Activated B cell treated with CpG ODN at 0.5 μM for 24 hours (primary cell): ENCODE measurements at regions of chr4 and their contacts with region 1.

Region 1: DNA sequence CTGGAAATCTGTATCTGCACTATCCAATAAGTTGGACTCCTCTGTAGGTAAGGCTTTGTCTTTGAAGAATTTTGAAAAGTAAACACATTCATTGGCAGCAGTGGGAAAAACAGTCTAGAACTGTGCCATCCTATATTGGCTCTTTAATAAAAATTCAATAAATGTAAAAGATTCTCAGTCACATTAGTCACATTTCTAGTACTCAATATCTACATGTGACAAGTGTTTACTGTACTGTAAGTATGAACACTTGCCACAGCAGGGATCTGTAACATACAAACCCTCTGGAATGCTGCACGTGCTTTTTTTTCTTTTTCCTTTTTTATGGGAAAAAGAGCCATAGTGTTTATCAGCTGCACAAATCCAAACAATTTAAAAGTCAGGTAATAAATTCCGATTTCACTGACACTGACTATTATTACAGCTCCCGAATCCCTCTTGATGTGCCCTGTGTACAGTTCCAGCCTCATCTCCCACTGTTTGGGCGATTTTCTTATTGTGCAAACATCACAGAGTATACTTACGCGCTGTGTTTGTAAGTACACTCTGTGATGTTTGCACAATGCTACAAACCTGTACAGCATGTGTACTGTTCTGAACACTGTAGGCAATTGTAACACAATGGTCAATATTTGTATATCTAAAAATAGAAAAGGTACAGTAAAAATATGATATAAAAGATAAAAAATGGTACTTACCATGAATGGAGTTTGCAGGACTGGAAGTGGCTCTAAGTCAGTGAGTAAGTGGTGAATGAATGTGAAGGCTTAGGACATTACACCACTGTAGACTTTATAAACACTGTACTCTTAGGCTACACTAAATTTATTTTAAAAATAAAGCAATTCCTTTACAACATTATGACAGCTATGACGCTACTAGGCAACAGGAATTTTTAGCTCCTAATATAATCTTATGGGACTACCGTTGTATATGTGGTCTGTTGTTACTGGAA is 8.7 kb downstream of the PYURF start:
- DNase-seq: no peak
- ATAC-seq: no peak
- H3K4me3 Mint-ChIP-seq: no peak overlapping the region
- H3K27ac Mint-ChIP-seq: no peak overlapping the region
- H3K4me1 Mint-ChIP-seq: no peaks in the 10 kb centered on the region
- H3K27me3 Mint-ChIP-seq: no peaks in the 10 kb centered on the region
- CTCF ChIP-seq: no peak

Region 2: DNA sequence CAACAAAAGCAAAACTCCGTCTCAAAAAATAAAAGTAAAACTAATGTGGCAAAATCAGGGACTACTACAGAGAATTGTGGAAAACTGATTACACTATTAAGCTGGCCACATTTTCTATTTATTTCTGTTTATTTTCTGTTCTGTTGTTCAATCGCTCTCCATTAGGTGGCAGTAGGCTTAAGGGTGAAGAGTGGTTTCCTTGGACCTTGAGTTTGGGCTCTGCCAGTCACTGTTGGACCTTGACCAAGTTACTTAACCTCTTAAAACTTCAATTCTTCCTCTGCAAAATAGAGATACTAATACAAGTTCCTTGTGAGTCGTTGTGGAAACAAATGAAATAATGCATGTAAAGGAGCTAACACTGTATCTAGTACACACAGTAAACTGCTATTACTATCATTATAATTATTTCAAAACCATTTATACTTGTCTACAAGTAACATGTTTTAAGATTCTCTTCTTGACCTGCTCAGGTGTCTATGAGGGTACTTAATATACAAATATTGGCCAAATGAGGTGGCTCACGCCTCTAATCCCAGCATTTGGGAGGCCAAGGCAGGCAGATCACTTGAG is 1139.0 kb before region 1 on chr4:
- CTCF ChIA-PET with region 1: no interaction called
- POLR2A ChIA-PET with region 1: no interaction called
- intact Hi-C with region 1: no loop called
- DNase-seq: no peak
- ATAC-seq: peak; percentile 73
- H3K4me3 Mint-ChIP-seq: no peak overlapping the region
- H3K27ac Mint-ChIP-seq: no peak overlapping the region
- H3K4me1 Mint-ChIP-seq: peaks cover 7% of the 10 kb centered on the region
- H3K27me3 Mint-ChIP-seq: no peaks in the 10 kb centered on the region
- CTCF ChIP-seq: no peak

Region 3: GRCh38 chr4:87679449-87680169 is 835.2 kb before region 1 on chr4:
- CTCF ChIA-PET with region 1: no interaction called
- POLR2A ChIA-PET with region 1: no interaction called
- intact Hi-C with region 1: loop called (anchors 2 kb)
- DNase-seq: no peak
- ATAC-seq: no peak
- H3K4me3 Mint-ChIP-seq: no peak overlapping the region
- H3K27ac Mint-ChIP-seq: no peak overlapping the region
- H3K4me1 Mint-ChIP-seq: no peaks in the 10 kb centered on the region
- H3K27me3 Mint-ChIP-seq: no peaks in the 10 kb centered on the region
- CTCF ChIP-seq: peak; percentile 61

Region 4: DNA sequence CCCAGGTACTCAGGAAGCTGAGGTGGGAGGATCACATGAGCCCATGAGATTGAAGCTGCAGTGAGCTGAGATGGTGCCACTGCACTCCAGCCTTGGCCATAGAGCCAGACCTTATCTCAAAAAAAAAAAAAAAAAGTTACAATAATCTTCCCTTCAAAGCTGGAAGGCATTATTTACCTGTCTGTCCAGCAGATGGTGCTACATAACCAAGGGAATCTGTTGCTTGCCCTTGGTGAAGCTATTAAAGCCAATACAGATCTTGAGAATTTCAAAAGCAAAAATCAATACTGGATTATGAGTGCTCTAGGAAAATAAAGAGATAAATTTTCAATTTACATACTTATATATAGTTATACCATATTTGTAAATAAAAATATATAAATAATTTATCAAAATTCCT is 481.5 kb before region 1 on chr4:
- CTCF ChIA-PET with region 1: interaction called, 13 read pairs
- POLR2A ChIA-PET with region 1: no interaction called
- intact Hi-C with region 1: loop called (anchors 1 kb)
- DNase-seq: no peak
- ATAC-seq: no peak
- H3K4me3 Mint-ChIP-seq: no peak overlapping the region
- H3K27ac Mint-ChIP-seq: no peak overlapping the region
- H3K4me1 Mint-ChIP-seq: no peaks in the 10 kb centered on the region
- H3K27me3 Mint-ChIP-seq: no peaks in the 10 kb centered on the region
- CTCF ChIP-seq: no peak

Region 5: DNA sequence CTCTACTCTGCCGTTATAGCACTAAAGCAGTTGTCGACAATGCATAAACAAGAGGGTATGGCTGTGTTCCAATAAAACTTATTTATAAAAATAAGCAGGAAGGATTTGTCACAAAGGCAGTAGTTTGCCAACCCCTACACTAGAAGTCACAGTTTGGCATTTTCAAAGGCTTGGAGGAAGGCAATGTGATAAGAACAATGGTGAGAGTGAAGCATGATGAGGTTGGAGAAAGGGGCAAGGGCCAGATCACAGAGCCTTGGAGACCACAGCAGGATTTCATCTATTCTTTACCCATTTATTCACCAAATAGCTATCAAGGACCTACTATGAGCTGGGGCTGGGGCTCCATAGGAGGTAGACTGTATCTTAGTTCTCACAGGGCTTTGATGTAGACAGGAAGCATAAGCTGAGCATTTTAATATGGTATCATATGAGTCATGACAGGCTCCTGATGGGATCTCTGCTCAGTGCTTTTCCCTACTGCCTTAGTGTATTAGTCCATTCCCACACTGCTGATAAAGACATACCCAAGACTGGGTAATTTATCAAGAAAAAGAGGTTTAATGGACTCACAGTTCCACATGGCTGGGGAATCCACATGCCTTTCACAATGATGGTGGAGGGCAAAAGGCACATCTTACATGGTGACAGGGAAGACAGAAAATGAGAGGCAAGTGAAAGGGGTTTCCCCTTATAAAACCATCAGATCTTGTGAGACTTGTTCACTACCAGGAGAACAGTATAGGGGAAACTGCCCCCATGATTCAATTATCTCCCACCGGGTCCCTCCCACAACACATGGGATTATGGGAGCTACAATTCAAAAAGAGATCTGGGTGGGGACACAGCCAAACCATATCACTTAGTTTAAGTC is 289.4 kb before region 1 on chr4:
- CTCF ChIA-PET with region 1: interaction called, 19 read pairs
- POLR2A ChIA-PET with region 1: no interaction called
- intact Hi-C with region 1: no loop called
- DNase-seq: no peak
- ATAC-seq: no peak
- H3K4me3 Mint-ChIP-seq: no peak overlapping the region
- H3K27ac Mint-ChIP-seq: no peak overlapping the region
- H3K4me1 Mint-ChIP-seq: no peaks in the 10 kb centered on the region
- H3K27me3 Mint-ChIP-seq: peaks cover 2% of the 10 kb centered on the region
- CTCF ChIP-seq: no peak

Region 6: DNA sequence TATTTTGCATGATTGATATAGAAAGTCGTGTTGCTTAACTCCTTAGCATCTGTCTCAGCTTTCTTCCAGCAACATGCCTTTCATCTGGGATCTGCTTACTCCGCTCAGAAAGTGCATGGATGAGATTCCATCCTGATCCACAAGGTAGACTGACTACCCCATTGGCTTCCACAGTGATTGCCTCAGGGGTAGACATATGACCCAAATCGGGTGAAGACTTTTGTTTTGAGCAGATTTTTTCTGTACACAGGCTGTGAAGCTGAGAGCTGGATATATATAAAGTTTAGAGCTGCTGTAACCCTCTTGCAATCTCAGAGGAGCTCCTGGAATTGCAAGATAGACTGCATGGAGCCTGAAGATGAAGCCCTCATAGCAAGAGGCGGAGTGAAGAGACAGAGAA is 144.9 kb before region 1 on chr4:
- CTCF ChIA-PET with region 1: interaction called, 6 read pairs
- POLR2A ChIA-PET with region 1: no interaction called
- intact Hi-C with region 1: loop called (anchors 1 kb)
- DNase-seq: no peak
- ATAC-seq: no peak
- H3K4me3 Mint-ChIP-seq: no peak overlapping the region
- H3K27ac Mint-ChIP-seq: no peak overlapping the region
- H3K4me1 Mint-ChIP-seq: no peaks in the 10 kb centered on the region
- H3K27me3 Mint-ChIP-seq: no peaks in the 10 kb centered on the region
- CTCF ChIP-seq: no peak